ENCODE measurements at regions of chr5 and their contacts with region 1.

Region 1: GRCh38 chr5:82165740-82166530 is 112.2 kb downstream of the RPS23 start:
- DNase-seq: peak in 41 of 42 donors; percentile 15 to 91 (median 68)

Region 2: DNA sequence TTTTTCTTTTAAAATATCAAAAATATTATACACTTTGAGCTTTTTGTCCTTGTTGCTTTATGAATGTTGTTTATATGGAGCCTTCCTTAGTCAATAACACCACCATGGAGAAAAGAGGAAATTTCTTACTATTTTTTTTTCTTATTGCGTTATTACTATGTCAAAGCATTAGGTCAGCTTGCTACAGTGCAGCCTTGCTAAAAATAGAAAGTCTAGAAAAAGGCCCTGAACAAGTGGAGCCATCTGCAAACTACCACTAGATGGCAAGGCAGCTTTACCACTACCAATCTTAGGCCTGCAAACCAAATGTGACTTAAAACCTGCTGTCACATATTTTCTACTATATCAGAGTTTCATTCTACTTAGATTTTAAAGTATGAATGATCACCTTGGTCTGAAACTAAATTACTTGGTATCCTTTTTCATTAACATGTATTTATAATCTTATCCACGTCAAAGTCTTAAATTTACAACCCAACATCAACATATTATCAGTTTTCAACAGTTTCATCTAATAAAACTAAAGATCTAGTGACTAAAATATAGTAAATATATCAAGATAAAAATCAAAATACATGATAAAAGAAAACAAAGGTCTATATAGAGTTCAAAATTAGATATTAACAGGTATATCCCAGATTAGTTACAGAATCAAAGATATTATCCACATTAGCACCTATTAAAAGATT is 658.9 kb before region 1 on chr5:
- intact Hi-C with region 1: loop called (anchors 5 kb)
- DNase-seq: peak in 36 of 42 donors; percentile 13 to 88 (median 61)

Region 3: DNA sequence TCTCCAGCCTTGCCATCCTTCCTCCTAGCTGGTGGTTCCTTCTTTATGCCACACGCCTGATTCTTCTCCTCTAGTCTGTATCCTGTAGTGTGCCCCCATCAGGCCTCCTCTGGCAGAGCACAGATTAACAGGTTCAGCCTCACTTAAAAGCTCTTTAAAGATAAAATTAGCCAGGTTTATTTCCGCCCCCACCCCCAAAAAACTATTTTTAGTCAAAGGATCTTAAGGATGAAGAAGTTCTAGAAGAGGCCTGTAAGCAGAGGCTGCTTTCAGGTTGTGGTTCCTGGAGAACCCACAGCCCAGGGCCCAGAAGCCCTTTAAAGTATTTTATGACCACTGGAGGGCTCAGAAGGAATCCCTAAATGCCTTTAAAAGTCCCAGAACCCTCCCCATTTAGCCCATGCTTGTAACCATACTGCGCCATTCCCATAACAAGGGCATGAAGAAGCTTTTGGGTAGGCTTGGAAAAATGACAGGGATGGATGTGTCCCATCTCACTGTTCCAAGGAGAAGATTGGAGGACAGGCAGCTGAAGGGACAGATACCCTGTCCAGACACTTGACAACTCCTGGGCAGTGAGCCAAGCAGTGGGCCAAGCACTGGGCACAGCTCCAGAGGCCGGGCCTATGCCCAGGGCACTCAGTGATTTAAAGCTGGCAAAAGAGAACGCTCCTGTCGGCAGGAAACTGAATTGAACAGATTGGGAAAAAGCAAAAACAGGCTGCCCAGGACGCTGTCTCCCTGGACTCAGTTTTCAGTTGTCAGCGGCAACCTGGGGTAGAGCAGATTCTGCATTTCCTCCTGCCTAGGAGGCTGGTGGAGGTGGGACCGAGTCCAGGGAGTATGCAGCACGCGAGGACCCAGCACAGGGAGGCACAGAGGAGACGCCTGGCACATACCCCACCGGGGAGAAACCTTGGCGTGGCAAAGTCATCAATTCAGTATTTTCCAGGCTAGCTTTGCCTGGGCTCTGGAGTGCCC is 308.7 kb before region 1 on chr5:
- intact Hi-C with region 1: loop called (anchors 5 kb)
- DNase-seq: peak; percentile 50 to 93 (median 84)

Region 4: DNA sequence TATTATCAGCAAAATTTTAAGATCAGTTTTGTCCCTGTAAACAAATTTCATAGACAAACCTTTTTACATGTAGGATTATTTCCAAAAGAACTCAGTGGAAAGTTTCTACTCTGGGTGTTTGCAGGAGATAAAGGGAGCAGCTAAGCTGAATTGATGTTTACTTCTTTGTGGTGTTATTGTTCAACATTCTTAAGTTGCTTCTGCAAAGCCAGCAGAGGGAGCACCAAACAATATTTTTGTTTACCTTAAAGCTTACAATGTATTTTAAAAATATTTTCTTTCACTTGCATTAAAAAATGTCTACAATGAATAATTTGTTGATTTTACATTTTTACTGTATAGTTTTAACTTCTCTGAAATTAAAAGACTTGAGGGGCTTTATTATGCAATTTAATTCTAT is 58.7 kb before region 1 on chr5:
- intact Hi-C with region 1: loop called (anchors 10 kb)
- DNase-seq: peak in 3 of 42 donors; percentile 17 to 20 (median 18)

Measured in head of caudate nucleus (tissue), 42 donors.